Naive thymus-derived CD4-positive, alpha-beta T cell (primary cell): ENCODE measurements at regions of chr17 and their contacts with region 1.

Region 1: DNA sequence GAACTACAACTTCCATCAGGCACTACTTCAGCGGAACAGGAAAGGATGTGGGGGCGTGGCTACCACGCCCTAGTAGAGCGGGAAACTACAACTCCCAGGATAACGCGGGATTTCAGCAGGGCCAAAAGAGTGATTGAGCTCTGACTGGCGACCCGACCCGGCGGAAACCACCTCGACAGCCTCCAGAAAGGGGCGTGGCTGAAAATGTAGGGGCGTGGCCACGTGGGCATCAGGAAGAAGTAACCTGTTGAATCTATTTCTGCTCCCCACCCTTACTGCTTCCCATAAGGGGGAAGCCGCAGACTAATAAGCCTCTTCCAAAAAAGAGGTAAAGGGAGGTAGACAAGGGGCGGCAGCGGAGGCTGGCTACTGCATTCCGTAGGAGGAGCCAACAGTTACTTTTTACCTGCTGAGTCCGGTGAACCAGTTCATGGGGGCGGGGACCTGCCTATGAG is at the start of gene TMEM102:
- DNase-seq: peak; percentile 92 to 99 (median 99)
- ATAC-seq: peak; percentile 94
- H3K4me3 ChIP-seq: peak within 1 kb of the TSS; percentile 65
- H3K4me3 Mint-ChIP-seq: peak within 1 kb of the TSS; percentile 86 to 96 (median 94)
- H3K27ac ChIP-seq: peak within 1 kb of the TSS; percentile 83
- H3K27ac Mint-ChIP-seq: peak within 1 kb of the TSS; percentile 89 to 97 (median 95)
- H3K4me1 ChIP-seq: peaks cover 16 to 38% of the 10 kb centered on the region in 2 donors
- H3K4me1 Mint-ChIP-seq: peaks cover 26 to 42% (median 36%) of the 10 kb centered on the region in 7 donors
- H3K27me3 ChIP-seq: peaks cover 0 to 9% of the 10 kb centered on the region in 2 donors
- H3K27me3 Mint-ChIP-seq: peaks cover 11 to 13% (median 12%) of the 10 kb centered on the region in 5 donors
- total RNA-seq, gene TMEM102: 8.2 to 19.1 (median 16.5) TPM

Region 2: GRCh38 chr17:7045909-7046724 is 389.1 kb before region 1 on chr17:
- CTCF ChIA-PET with region 1: no interaction called
- POLR2A ChIA-PET with region 1: interaction called, 3 read pairs
- intact Hi-C with region 1: loop called in 1 of 2 experiments (anchors 2 kb)
- DNase-seq: peak in 8 of 9 donors; percentile 48 to 79 (median 69)
- ATAC-seq: peak; percentile 58
- H3K4me3 ChIP-seq: peak overlapping the region; percentile 66
- H3K4me3 Mint-ChIP-seq: peak overlapping the region; percentile 78 to 91 (median 86)
- H3K27ac ChIP-seq: peak overlapping the region; percentile 74
- H3K27ac Mint-ChIP-seq: peak overlapping the region; percentile 69 to 96 (median 92)
- H3K4me1 ChIP-seq: peaks cover 27 to 30% of the 10 kb centered on the region in 2 donors
- H3K4me1 Mint-ChIP-seq: peaks cover 0 to 53% (median 36%) of the 10 kb centered on the region in 7 donors
- H3K27me3 ChIP-seq: no peaks in the 10 kb centered on the region
- H3K27me3 Mint-ChIP-seq: peaks cover 0 to 36% (median 0%) of the 10 kb centered on the region in 5 donors

Region 3: GRCh38 chr17:7229543-7230235 is 205.6 kb before region 1 on chr17:
- CTCF ChIA-PET with region 1: no interaction called
- POLR2A ChIA-PET with region 1: no interaction called
- intact Hi-C with region 1: no loop called
- DNase-seq: no peak
- ATAC-seq: no peak
- H3K4me3 ChIP-seq: no peak overlapping the region
- H3K4me3 Mint-ChIP-seq: no peak overlapping the region
- H3K27ac ChIP-seq: no peak overlapping the region
- H3K27ac Mint-ChIP-seq: no peak overlapping the region
- H3K4me1 ChIP-seq: peaks cover 7% of the 10 kb centered on the region in 2 donors
- H3K4me1 Mint-ChIP-seq: peaks cover 20 to 38% (median 30%) of the 10 kb centered on the region in 7 donors
- H3K27me3 ChIP-seq: no peaks in the 10 kb centered on the region
- H3K27me3 Mint-ChIP-seq: peaks cover 0 to 2% (median 0%) of the 10 kb centered on the region in 5 donors

Region 4: GRCh38 chr17:7306911-7307686 is 128.1 kb before region 1 on chr17 and contains the start of gene EIF5A:
- CTCF ChIA-PET with region 1: interaction called, 7 read pairs
- POLR2A ChIA-PET with region 1: interaction called, 5 read pairs
- intact Hi-C with region 1: loop called (anchors 1 kb)
- DNase-seq: peak; percentile 99 to 100 (median 100)
- ATAC-seq: peak; percentile 79
- H3K4me3 ChIP-seq: peak within 1 kb of the TSS; percentile 78
- H3K4me3 Mint-ChIP-seq: peak within 1 kb of the TSS; percentile 90 to 99 (median 95)
- H3K27ac ChIP-seq: peak within 1 kb of the TSS; percentile 100
- H3K27ac Mint-ChIP-seq: peak within 1 kb of the TSS; percentile 98 to 100 (median 99)
- H3K4me1 ChIP-seq: peaks cover 19 to 20% of the 10 kb centered on the region in 2 donors
- H3K4me1 Mint-ChIP-seq: peaks cover 28 to 44% (median 35%) of the 10 kb centered on the region in 7 donors
- H3K27me3 ChIP-seq: no peaks in the 10 kb centered on the region
- H3K27me3 Mint-ChIP-seq: peaks cover 0 to 9% (median 0%) of the 10 kb centered on the region in 5 donors
- total RNA-seq, gene EIF5A: 237 to 666 (median 453) TPM

Region 5: GRCh38 chr17:7394452-7395191 is 40.6 kb before region 1 on chr17 and contains the start of gene PLSCR3:
- CTCF ChIA-PET with region 1: interaction called, 5 read pairs
- POLR2A ChIA-PET with region 1: interaction called, 11 read pairs
- intact Hi-C with region 1: loop called in 1 of 2 experiments (anchors 1 kb)
- DNase-seq: peak; percentile 68 to 91 (median 82)
- ATAC-seq: peak; percentile 94
- H3K4me3 ChIP-seq: peak within 1 kb of the TSS; percentile 94
- H3K4me3 Mint-ChIP-seq: peak within 1 kb of the TSS; percentile 93 to 97 (median 95)
- H3K27ac ChIP-seq: peak within 1 kb of the TSS; percentile 87
- H3K27ac Mint-ChIP-seq: peak within 1 kb of the TSS; percentile 85 to 97 (median 92)
- H3K4me1 ChIP-seq: peaks cover 7 to 25% of the 10 kb centered on the region in 2 donors
- H3K4me1 Mint-ChIP-seq: peaks cover 25 to 46% (median 27%) of the 10 kb centered on the region in 7 donors
- H3K27me3 ChIP-seq: no peaks in the 10 kb centered on the region
- H3K27me3 Mint-ChIP-seq: no peaks in the 10 kb centered on the region
- total RNA-seq, gene PLSCR3: 74.8 to 142 (median 85.0) TPM

Region 6: GRCh38 chr17:7509937-7510336 is 74.7 kb after region 1 on chr17:
- CTCF ChIA-PET with region 1: interaction called, 12 read pairs
- POLR2A ChIA-PET with region 1: interaction called, 13 read pairs
- intact Hi-C with region 1: no loop called
- DNase-seq: no peak
- ATAC-seq: no peak
- H3K4me3 ChIP-seq: no peak overlapping the region
- H3K4me3 Mint-ChIP-seq: no peak overlapping the region
- H3K27ac ChIP-seq: no peak overlapping the region
- H3K27ac Mint-ChIP-seq: no peak overlapping the region
- H3K4me1 ChIP-seq: no peaks in the 10 kb centered on the region
- H3K4me1 Mint-ChIP-seq: peaks cover 0 to 7% (median 0%) of the 10 kb centered on the region in 7 donors
- H3K27me3 ChIP-seq: no peaks in the 10 kb centered on the region
- H3K27me3 Mint-ChIP-seq: no peaks in the 10 kb centered on the region

Region 7: DNA sequence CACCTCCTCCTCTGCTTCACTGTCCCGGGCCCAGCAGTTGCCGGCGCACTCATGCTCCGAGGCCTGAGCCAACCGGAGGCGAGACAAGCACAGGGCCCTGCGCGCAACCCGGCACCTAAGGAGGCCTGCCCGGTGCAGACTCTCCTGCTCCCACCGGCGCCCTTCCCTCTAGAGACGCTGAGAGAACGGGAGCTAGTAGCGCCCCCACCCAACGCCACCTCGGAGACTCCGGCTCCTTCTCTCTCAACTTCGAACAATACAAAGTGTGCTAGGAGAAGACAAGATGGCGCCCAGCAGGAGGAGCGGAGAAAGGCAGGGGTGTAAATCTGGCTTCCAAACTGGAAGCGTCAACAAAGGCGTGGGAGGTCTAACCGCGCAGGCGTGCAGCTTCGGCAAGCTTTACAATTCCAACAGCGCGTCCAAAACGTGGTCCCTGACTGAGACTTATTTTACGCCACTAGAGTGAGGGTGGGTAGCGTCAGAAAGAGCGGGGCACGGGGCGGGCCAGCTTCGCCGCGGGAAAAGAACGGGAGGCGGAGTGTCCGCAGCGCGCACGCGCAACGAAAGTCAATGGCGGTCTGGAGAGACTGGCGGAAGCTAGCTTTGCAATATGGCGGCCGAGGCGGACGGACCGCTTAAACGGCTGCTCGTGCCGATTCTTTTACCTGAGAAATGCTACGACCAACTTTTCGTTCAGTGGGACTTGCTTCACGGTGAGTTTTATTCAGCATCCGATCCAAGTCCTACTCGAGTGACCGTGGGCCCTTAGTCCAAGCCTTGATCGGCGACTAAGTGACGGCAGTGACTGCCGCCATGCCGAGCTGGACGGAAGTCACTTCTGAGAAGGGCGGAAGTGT is 148.2 kb after region 1 on chr17 and contains the start of gene MPDU1:
- CTCF ChIA-PET with region 1: interaction called, 9 read pairs
- POLR2A ChIA-PET with region 1: interaction called, 15 read pairs
- intact Hi-C with region 1: no loop called
- DNase-seq: peak; percentile 89 to 98 (median 97)
- ATAC-seq: peak; percentile 80
- H3K4me3 ChIP-seq: peak within 1 kb of the TSS; percentile 100
- H3K4me3 Mint-ChIP-seq: peak within 1 kb of the TSS; percentile 89 to 100 (median 99)
- H3K27ac ChIP-seq: peak within 1 kb of the TSS; percentile 95
- H3K27ac Mint-ChIP-seq: peak within 1 kb of the TSS; percentile 98 to 100 (median 100)
- H3K4me1 ChIP-seq: peaks cover 28 to 35% of the 10 kb centered on the region in 2 donors
- H3K4me1 Mint-ChIP-seq: peaks cover 33 to 60% (median 55%) of the 10 kb centered on the region in 7 donors
- H3K27me3 ChIP-seq: no peaks in the 10 kb centered on the region
- H3K27me3 Mint-ChIP-seq: no peaks in the 10 kb centered on the region
- total RNA-seq, gene MPDU1: 25.4 to 79.8 (median 31.4) TPM